ENCODE measurements at regions of chr17 and their contacts with region 1.

Region 1: DNA sequence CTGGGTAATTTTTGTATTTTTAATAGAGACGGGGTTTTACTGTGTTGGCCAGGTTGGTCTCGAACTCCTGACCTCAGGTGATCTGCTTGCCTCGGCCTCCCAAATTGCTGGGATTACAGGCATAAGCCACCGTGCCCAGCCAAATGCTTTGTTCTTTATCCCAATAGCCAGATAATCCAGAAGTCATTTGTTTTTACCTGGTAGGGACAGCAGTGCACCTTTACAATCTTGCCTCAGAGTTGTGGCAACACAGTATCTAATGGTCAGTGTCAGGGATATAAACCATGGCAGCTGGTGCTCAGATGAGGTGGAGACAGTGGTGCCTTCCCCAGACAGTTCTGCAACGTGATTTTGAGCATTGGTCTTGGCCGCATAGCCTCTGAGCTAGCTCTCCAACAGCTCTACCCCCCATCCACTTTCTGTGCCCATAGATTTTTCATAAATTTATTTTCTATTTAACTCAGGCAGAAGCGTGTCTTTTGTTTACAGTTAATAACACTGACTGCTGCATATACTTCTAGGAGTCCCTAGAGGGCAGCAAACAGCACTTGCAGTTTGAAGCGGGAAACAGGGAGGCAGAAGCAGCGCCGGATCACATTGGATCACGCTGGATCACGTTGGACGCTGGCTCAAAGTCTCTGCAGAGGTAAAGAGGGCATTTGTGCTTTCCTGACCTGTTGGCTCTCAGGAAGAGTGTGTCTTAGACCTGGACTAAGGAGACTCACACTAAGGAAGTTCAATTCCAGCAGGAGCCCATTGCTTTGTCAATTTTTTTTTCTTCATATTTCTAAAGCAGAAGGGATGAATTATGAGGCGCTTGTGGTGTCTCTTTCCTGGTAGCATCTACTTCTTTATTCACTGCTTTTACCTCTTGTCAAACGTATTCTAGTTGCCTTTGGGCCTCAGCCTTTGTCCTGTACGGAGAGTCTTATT is 5.1 kb upstream of the GGT6 start:
- DNase-seq: peak; percentile 61
- H3K4me3 ChIP-seq: no peak overlapping the region
- H3K27ac ChIP-seq: no peak overlapping the region
- H3K4me1 ChIP-seq: peaks cover 17% of the 10 kb centered on the region
- H3K27me3 ChIP-seq: no peaks in the 10 kb centered on the region
- CTCF ChIP-seq: peak; percentile 90 to 92

Region 2: GRCh38 chr17:4476511-4477070 is 88.9 kb before region 1 on chr17:
- CTCF ChIA-PET with region 1: no interaction called
- dilution Hi-C with region 1: loop called (anchors 5 kb)
- in situ Hi-C with region 1: no loop called
- intact Hi-C with region 1: no loop called
- DNase-seq: no peak
- H3K4me3 ChIP-seq: no peak overlapping the region
- H3K27ac ChIP-seq: no peak overlapping the region
- H3K4me1 ChIP-seq: peaks cover 11% of the 10 kb centered on the region
- H3K27me3 ChIP-seq: no peaks in the 10 kb centered on the region
- CTCF ChIP-seq: no peak

Region 3: GRCh38 chr17:4520894-4521600 is 44.4 kb before region 1 on chr17:
- CTCF ChIA-PET with region 1: no interaction called
- dilution Hi-C with region 1: no loop called
- in situ Hi-C with region 1: no loop called
- intact Hi-C with region 1: no loop called
- DNase-seq: peak; percentile 88
- H3K4me3 ChIP-seq: no peak overlapping the region
- H3K27ac ChIP-seq: peak overlapping the region; percentile 32
- H3K4me1 ChIP-seq: peaks cover 26% of the 10 kb centered on the region
- H3K27me3 ChIP-seq: no peaks in the 10 kb centered on the region
- CTCF ChIP-seq: no peak

Region 4: DNA sequence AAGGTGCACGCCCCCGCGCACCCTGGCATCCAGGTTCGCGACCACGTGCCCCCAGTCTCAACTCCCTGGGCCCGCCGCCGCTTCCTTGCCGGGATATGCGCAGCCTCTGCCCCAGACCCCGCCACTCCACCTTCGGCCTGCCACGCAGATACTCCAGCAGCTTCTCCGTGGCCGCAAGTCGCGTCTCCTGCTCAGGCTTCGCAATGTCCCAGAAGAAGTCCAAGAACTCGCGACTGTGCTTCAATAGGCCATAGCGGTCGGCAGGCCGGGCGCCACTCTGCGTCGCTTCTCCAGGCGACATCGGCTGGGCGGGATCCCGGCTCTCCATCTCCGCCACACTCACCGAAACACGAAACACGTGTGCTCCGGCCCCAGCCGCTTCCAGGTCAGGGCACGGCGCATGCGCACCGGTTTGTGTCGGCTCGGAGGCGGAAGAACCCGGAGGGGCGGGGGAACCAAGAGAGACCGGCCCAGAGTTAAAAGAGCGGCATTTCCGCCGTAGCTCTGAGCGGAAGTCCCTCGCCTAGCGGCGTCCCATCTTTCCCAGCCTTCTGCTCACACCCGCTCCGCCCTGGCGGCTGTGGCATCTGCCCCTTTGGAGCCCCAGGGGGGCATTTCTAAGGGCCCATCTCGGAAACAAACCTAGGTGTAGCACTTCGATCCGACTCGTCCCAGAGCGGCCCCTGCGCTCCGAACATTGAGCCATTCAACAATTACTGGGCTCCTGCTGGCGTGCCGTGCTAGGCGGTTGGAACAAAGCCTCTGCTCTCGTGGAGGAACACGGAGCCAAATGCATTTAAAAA is 10.3 kb before region 1 on chr17 and contains the start of gene MYBBP1A:
- CTCF ChIA-PET with region 1: interaction called, 12 read pairs
- dilution Hi-C with region 1: no loop called
- in situ Hi-C with region 1: no loop called
- intact Hi-C with region 1: no loop called
- DNase-seq: peak; percentile 92
- H3K4me3 ChIP-seq: peak within 1 kb of the TSS; percentile 78 to 100 (median 91)
- H3K27ac ChIP-seq: peak within 1 kb of the TSS; percentile 67
- H3K4me1 ChIP-seq: peaks cover 48% of the 10 kb centered on the region
- H3K27me3 ChIP-seq: no peaks in the 10 kb centered on the region
- CTCF ChIP-seq: no peak
- total RNA-seq, gene MYBBP1A: 63.2 to 105 TPM

Region 5: DNA sequence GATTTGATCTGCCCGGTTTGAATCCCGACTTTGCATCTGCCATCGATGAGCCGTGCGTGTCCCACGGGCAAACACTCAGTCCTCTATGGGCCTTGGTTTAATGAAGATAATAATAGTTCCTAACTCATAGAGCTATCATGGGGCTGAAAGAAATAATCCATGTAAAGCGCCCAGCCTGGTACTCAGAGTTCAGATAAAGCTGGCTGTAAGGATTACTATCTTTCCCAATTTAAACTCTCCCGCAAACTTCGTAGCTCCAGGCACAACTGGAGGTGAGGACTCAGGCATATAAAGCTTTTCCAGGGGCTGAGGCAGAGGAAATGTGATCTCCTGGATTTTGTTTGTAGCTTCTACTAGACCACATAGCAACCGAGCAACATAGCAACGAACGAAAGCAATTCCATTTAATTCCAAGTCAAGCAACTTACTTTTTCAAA is 59.7 kb after region 1 on chr17:
- CTCF ChIA-PET with region 1: interaction called, 10 read pairs
- dilution Hi-C with region 1: no loop called
- in situ Hi-C with region 1: loop called (anchors 5 kb)
- intact Hi-C with region 1: loop called (anchors 1 kb)
- DNase-seq: no peak
- H3K4me3 ChIP-seq: no peak overlapping the region
- H3K27ac ChIP-seq: no peak overlapping the region
- H3K4me1 ChIP-seq: no peaks in the 10 kb centered on the region
- H3K27me3 ChIP-seq: no peaks in the 10 kb centered on the region
- CTCF ChIP-seq: no peak

Region 6: DNA sequence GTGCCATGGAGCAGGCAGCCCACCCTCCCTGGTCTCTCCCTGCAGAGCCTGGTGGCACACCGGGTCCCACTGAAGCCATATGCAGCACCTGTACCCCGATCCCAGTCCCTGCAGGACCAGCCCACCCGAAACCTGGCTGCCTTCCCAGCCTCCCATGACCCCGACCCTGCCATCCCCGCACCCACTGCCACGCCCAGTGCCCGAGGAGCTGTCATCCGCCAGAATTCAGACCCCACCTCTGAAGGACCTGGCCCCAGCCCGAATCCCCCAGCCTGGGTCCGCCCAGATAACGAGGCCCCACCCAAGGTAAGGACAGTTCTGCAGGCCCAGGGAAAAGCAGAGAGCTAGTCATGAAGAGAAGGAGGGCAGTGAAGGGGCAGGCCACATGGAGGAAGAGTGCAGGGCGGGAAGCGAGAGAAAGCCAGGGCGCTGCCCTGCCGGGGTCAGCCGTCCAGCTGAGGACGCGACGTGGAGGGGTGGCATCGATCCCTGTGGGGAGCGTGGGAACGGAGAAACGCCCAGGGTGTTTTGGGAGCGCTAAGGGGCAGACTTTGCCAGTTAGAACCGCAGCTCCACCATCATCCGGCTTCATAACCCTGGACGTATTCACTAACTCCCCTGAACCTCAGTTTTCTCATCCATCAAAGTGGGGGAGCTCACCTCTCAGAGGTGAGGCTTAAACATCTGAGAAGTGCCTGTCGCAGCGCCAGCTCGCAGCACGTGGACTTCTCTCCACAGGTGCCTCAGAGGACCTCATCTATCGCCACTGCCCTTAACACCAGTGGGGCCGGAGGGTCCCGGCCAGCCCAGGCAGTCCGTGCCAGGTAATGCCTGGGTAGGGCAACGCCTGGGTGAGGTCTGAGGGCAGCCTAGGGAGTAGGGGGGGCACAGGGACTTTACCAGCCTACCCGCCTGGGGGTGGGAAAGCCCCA is 326.2 kb after region 1 on chr17:
- CTCF ChIA-PET with region 1: no interaction called
- dilution Hi-C with region 1: no loop called
- in situ Hi-C with region 1: loop called in 1 of 2 experiments (anchors 25 kb)
- intact Hi-C with region 1: loop called (anchors 2 kb)
- DNase-seq: no peak
- H3K4me3 ChIP-seq: no peak overlapping the region
- H3K27ac ChIP-seq: no peak overlapping the region
- H3K4me1 ChIP-seq: no peaks in the 10 kb centered on the region
- H3K27me3 ChIP-seq: no peaks in the 10 kb centered on the region
- CTCF ChIP-seq: no peak

Region 7: GRCh38 chr17:4903051-4903818 is 337.8 kb after region 1 on chr17 and contains the start of gene CHRNE:
- CTCF ChIA-PET with region 1: interaction called, 4 read pairs
- dilution Hi-C with region 1: no loop called
- in situ Hi-C with region 1: loop called in 1 of 2 experiments (anchors 25 kb)
- intact Hi-C with region 1: loop called (anchors 5 kb)
- DNase-seq: peak; percentile 73
- H3K4me3 ChIP-seq: no peak within 1 kb of the TSS
- H3K27ac ChIP-seq: no peak within 1 kb of the TSS
- H3K4me1 ChIP-seq: peaks cover 15% of the 10 kb centered on the region
- H3K27me3 ChIP-seq: no peaks in the 10 kb centered on the region
- CTCF ChIP-seq: peak; percentile 80 to 81
- total RNA-seq, gene CHRNE: under 0.01 TPM in 1 of 2 donors, not detected in the other

Region 8: GRCh38 chr17:5055543-5055942 is 490.1 kb after region 1 on chr17:
- CTCF ChIA-PET with region 1: no interaction called
- dilution Hi-C with region 1: no loop called
- in situ Hi-C with region 1: no loop called
- intact Hi-C with region 1: loop called (anchors 5 kb)
- DNase-seq: no peak
- H3K4me3 ChIP-seq: no peak overlapping the region
- H3K27ac ChIP-seq: no peak overlapping the region
- H3K4me1 ChIP-seq: no peaks in the 10 kb centered on the region
- H3K27me3 ChIP-seq: no peaks in the 10 kb centered on the region
- CTCF ChIP-seq: no peak

Measured in mammary epithelial cell (primary cell).